CD8-positive, alpha-beta T cell (primary cell): ENCODE measurements at regions of chr14 and their contacts with region 1.

Region 1: DNA sequence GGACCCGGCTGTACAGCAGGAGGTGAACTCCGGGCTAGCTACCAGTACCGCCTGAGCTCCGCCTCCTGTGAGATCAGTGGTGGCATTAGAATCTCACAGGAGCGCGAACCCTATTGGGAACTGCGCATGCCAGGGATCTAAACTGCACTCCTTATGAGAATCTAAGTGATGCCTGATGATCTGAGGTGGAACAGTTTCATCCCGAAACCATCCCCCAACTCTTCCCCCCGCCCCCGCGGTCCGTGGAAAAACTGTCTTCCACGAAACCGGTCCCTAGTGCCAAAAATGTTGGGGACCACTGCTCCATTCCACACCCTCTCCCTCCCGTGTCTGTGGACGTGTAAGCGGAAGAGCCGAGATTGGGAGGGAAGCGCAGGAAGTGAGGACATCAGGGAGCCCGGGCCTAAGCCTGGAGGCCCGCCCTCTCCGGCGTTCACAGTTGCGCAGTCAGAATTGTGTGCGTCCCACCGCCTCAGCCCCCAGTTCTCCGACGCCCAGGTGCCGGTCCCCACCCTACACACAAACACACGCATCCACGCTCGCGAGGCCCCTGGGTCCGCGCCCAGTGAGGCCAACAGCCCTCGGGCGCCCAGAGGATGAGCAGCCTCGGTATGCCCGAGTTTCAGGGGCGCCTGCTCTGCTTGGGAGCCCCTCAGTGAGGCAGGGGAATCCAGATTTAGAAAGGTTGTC is 1.8 kb upstream of the RNASE4 start:
- DNase-seq: peak; percentile 63 to 94 (median 80)
- ATAC-seq: peak; percentile 65
- H3K4me3 ChIP-seq: peak overlapping the region; percentile 67 to 93
- H3K4me3 Mint-ChIP-seq: no peak overlapping the region
- H3K27ac ChIP-seq: peak overlapping the region; percentile 80 to 90
- H3K27ac Mint-ChIP-seq: no peak overlapping the region
- H3K4me1 ChIP-seq: peaks cover 24% of the 10 kb centered on the region
- H3K4me1 Mint-ChIP-seq: peaks cover 29% of the 10 kb centered on the region
- H3K27me3 ChIP-seq: no peaks in the 10 kb centered on the region
- H3K27me3 Mint-ChIP-seq: no peaks in the 10 kb centered on the region
- CTCF ChIP-seq: no peak

Region 2: DNA sequence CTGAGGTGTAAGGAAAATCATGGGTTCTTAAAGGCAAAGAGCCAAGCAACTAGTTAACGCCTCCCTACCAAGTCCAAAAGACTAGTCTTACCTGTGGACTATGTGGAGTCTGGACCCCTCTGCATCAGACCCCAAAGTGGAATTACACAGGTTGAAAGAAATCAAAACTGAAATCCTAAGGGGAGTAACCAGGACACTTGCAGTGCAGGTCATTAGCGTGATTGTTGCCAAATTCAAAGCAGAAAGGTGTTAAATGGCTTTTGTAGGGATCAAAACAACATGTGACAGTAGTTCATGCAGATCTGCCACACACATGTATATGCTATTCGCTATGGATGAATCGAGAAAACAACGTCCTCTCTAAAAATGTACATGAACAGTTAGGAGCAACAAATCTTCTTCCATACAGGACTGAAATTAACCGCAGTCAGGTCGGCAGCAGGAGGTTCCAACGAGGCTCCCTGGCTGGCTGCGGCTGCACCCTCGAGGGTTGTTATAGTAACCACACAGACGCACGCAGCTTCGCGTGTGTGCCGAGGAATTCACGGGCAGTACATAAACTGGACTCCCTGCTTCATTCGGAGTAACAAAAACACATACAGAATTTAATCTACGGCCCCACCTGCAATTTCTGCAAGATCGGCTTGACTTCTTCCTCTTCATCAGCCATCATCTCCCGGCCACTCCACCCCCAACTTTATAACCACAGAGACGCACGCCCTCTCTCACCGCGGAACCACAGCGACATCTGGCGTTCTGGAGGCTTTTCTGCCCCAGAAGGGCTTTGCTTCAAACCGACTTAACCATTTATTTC is 377.1 kb before region 1 on chr14 and contains the start of gene TTC5:
- CTCF ChIA-PET with region 1: no interaction called
- POLR2A ChIA-PET with region 1: no interaction called
- intact Hi-C with region 1: loop called in 1 of 2 experiments (anchors 2 kb)
- DNase-seq: peak; percentile 87 to 95 (median 90)
- ATAC-seq: peak; percentile 99
- H3K4me3 ChIP-seq: peak within 1 kb of the TSS; percentile 62 to 77
- H3K4me3 Mint-ChIP-seq: peak within 1 kb of the TSS; percentile 91
- H3K27ac ChIP-seq: peak within 1 kb of the TSS; percentile 48 to 59
- H3K27ac Mint-ChIP-seq: peak within 1 kb of the TSS; percentile 90
- H3K4me1 ChIP-seq: peaks cover 16% of the 10 kb centered on the region
- H3K4me1 Mint-ChIP-seq: peaks cover 32% of the 10 kb centered on the region
- H3K27me3 ChIP-seq: no peaks in the 10 kb centered on the region
- H3K27me3 Mint-ChIP-seq: no peaks in the 10 kb centered on the region
- CTCF ChIP-seq: peak; percentile 93
- total RNA-seq, gene TTC5: 9.2 to 9.9 TPM

Region 3: DNA sequence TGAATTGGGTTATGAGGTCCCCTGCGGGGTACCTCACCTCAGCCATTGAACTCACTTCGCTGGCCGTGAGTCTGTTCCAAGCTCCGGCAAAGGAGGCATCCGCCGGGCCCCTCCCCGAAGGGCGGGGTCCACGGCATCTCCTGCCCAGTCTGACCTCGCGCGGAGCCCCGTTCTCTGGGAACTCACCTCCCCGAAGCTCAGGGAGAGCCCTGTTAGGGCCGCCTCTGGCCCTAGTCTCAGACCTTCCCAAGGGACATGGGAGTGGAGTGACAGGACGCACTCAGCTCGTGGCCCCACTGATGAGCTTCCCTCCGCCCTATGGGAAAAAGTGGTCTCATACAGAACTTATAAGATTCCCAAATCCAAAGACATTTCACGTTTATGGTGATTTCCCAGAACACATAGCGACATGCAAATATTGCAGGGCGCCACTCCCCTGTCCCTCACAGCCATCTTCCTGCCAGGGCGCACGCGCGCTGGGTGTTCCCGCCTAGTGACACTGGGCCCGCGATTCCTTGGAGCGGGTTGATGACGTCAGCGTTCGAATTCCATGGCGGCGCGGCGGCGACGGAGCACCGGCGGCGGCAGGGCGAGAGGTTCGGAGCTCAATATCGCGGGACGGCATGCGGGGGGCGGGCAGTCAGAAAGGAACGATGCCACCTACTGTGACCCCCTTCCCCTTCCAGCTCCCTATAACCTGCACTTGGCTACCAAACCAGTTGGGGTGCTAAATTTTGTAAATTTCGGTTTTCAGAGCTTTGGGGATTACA is 339.3 kb before region 1 on chr14 and contains the start of gene PARP2:
- CTCF ChIA-PET with region 1: interaction called, 6 read pairs
- POLR2A ChIA-PET with region 1: interaction called, 15 read pairs
- intact Hi-C with region 1: loop called (anchors 1 to 2 kb)
- DNase-seq: peak; percentile 70 to 97 (median 84)
- ATAC-seq: peak; percentile 81
- H3K4me3 ChIP-seq: peak within 1 kb of the TSS; percentile 96 to 98
- H3K4me3 Mint-ChIP-seq: peak within 1 kb of the TSS; percentile 100
- H3K27ac ChIP-seq: peak within 1 kb of the TSS; percentile 79 to 93
- H3K27ac Mint-ChIP-seq: peak within 1 kb of the TSS; percentile 97
- H3K4me1 ChIP-seq: peaks cover 8% of the 10 kb centered on the region
- H3K4me1 Mint-ChIP-seq: peaks cover 18% of the 10 kb centered on the region
- H3K27me3 ChIP-seq: peaks cover 0 to 3% of the 10 kb centered on the region in 2 experiments
- H3K27me3 Mint-ChIP-seq: no peaks in the 10 kb centered on the region
- CTCF ChIP-seq: peak; percentile 14
- total RNA-seq, gene PARP2: 15.9 to 16.5 TPM

Region 4: GRCh38 chr14:20461274-20462001 is 221.1 kb before region 1 on chr14 and contains the start of gene PIP4P1:
- CTCF ChIA-PET with region 1: no interaction called
- POLR2A ChIA-PET with region 1: interaction called, 22 read pairs
- intact Hi-C with region 1: loop called in 1 of 2 experiments (anchors 1 kb)
- DNase-seq: peak; percentile 95 to 100 (median 97)
- ATAC-seq: peak; percentile 85
- H3K4me3 ChIP-seq: peak within 1 kb of the TSS; percentile 72 to 85
- H3K4me3 Mint-ChIP-seq: peak within 1 kb of the TSS; percentile 92
- H3K27ac ChIP-seq: peak within 1 kb of the TSS; percentile 84 to 95
- H3K27ac Mint-ChIP-seq: peak within 1 kb of the TSS; percentile 96
- H3K4me1 ChIP-seq: peaks cover 26% of the 10 kb centered on the region
- H3K4me1 Mint-ChIP-seq: peaks cover 30% of the 10 kb centered on the region
- H3K27me3 ChIP-seq: no peaks in the 10 kb centered on the region
- H3K27me3 Mint-ChIP-seq: no peaks in the 10 kb centered on the region
- CTCF ChIP-seq: no peak
- total RNA-seq, gene PIP4P1: 87.7 to 105 TPM

Region 5: GRCh38 chr14:20657216-20658128 is 25.1 kb before region 1 on chr14:
- CTCF ChIA-PET with region 1: interaction called, 188 read pairs
- POLR2A ChIA-PET with region 1: interaction called, 5 read pairs
- intact Hi-C with region 1: loop called in 1 of 2 experiments (anchors 2 kb)
- DNase-seq: peak in 3 of 9 experiments; percentile 33 to 55 (median 45)
- ATAC-seq: peak; percentile 65
- H3K4me3 ChIP-seq: no peak overlapping the region
- H3K4me3 Mint-ChIP-seq: no peak overlapping the region
- H3K27ac ChIP-seq: no peak overlapping the region
- H3K27ac Mint-ChIP-seq: no peak overlapping the region
- H3K4me1 ChIP-seq: peaks cover 19% of the 10 kb centered on the region
- H3K4me1 Mint-ChIP-seq: peaks cover 31% of the 10 kb centered on the region
- H3K27me3 ChIP-seq: peaks cover 14 to 17% of the 10 kb centered on the region in 2 experiments
- H3K27me3 Mint-ChIP-seq: peaks cover 69% of the 10 kb centered on the region
- CTCF ChIP-seq: no peak

Region 6: GRCh38 chr14:20970983-20971704 is 288.6 kb after region 1 on chr14:
- CTCF ChIA-PET with region 1: no interaction called
- POLR2A ChIA-PET with region 1: no interaction called
- intact Hi-C with region 1: loop called in 1 of 2 experiments (anchors 5 kb)
- DNase-seq: peak; percentile 48 to 87 (median 75)
- ATAC-seq: peak; percentile 91
- H3K4me3 ChIP-seq: peak overlapping the region; percentile 80 to 85
- H3K4me3 Mint-ChIP-seq: peak overlapping the region; percentile 92
- H3K27ac ChIP-seq: no peak overlapping the region
- H3K27ac Mint-ChIP-seq: no peak overlapping the region
- H3K4me1 ChIP-seq: peaks cover 11% of the 10 kb centered on the region
- H3K4me1 Mint-ChIP-seq: peaks cover 10% of the 10 kb centered on the region
- H3K27me3 ChIP-seq: peaks cover 0 to 3% of the 10 kb centered on the region in 2 experiments
- H3K27me3 Mint-ChIP-seq: peaks cover 24% of the 10 kb centered on the region
- CTCF ChIP-seq: peak; percentile 92

Region 7: DNA sequence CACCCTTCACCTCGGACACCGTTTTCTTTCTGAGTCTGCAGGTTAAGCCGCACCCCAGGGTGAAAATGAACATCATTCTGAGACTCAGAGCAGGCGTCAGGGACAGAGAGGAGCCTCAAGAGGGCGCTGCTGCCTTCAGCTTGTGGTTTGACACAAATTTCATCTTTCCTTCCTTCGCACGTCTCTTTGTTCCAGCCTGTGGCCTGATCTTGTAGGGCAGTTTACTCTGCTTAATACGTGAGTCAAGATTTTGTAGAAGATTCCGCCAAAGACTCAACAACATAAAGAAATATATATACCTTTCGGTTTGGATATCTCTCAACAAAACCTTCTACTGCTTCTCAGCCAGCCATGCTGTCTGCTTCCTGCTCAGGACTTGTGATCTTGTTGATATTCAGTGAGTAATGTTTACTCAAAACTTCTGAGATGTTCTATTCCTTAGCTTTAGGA is 1320.3 kb after region 1 on chr14:
- CTCF ChIA-PET with region 1: no interaction called
- POLR2A ChIA-PET with region 1: no interaction called
- intact Hi-C with region 1: no loop called
- DNase-seq: peak; percentile 39 to 84 (median 70)
- ATAC-seq: peak; percentile 76
- H3K4me3 ChIP-seq: peak overlapping the region; percentile 17 to 28
- H3K4me3 Mint-ChIP-seq: peak overlapping the region; percentile 67
- H3K27ac ChIP-seq: peak overlapping the region; percentile 50 to 67
- H3K27ac Mint-ChIP-seq: peak overlapping the region; percentile 93
- H3K4me1 ChIP-seq: peaks cover 20% of the 10 kb centered on the region
- H3K4me1 Mint-ChIP-seq: peaks cover 28% of the 10 kb centered on the region
- H3K27me3 ChIP-seq: no peaks in the 10 kb centered on the region
- H3K27me3 Mint-ChIP-seq: no peaks in the 10 kb centered on the region
- CTCF ChIP-seq: peak; percentile 32